Activated naive CD4-positive, alpha-beta T cell treated with anti-CD3 and anti-CD28 coated beads for 36 hours (primary cell): ENCODE measurements at regions of chr1 and their contacts with region 1.

Region 1: GRCh38 chr1:28144203-28145135 is 32.0 kb downstream of the PTAFR start:
- DNase-seq: peak; percentile 77
- H3K4me3 Mint-ChIP-seq: no peak overlapping the region
- H3K27ac Mint-ChIP-seq: no peak overlapping the region
- H3K4me1 Mint-ChIP-seq: peaks cover 16% of the 10 kb centered on the region
- H3K27me3 Mint-ChIP-seq: peaks cover 7% of the 10 kb centered on the region

Region 2: GRCh38 chr1:28056129-28056925 is 88.1 kb before region 1 on chr1:
- CTCF ChIA-PET with region 1: no interaction called
- intact Hi-C with region 1: loop called (anchors 2 kb)
- DNase-seq: peak; percentile 85
- H3K4me3 Mint-ChIP-seq: no peak overlapping the region
- H3K27ac Mint-ChIP-seq: peak overlapping the region; percentile 59
- H3K4me1 Mint-ChIP-seq: peaks cover 45% of the 10 kb centered on the region
- H3K27me3 Mint-ChIP-seq: no peaks in the 10 kb centered on the region

Region 3: GRCh38 chr1:28112388-28113241 is 31.9 kb before region 1 on chr1:
- CTCF ChIA-PET with region 1: no interaction called
- intact Hi-C with region 1: loop called (anchors 1 kb)
- DNase-seq: peak; percentile 25
- H3K4me3 Mint-ChIP-seq: no peak overlapping the region
- H3K27ac Mint-ChIP-seq: no peak overlapping the region
- H3K4me1 Mint-ChIP-seq: peaks cover 13% of the 10 kb centered on the region
- H3K27me3 Mint-ChIP-seq: no peaks in the 10 kb centered on the region

Region 4: DNA sequence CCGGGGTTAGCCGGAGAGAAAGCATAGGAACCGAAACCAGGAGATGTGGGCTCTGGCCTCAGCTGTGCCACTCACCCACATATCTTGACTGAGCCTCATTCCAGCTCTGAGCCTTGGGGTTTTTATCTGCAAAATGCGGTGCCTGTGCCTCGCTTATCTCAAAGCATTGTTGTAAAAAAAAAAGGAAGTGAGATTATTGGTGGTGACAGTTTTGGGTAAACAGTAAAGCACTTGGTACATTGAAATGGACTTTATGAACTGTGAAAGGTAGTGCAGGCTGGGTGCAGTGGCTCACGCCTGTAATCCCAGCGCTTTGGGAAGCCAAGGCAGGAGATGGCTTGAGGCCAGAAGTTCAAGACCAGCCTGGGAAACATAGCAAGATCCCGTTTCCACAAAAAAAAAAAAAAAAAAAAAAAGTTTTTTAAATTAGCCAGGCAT is 28.3 kb after region 1 on chr1:
- CTCF ChIA-PET with region 1: interaction called, 3 read pairs
- intact Hi-C with region 1: loop called (anchors 1 kb)
- DNase-seq: peak; percentile 38
- H3K4me3 Mint-ChIP-seq: no peak overlapping the region
- H3K27ac Mint-ChIP-seq: no peak overlapping the region
- H3K4me1 Mint-ChIP-seq: peaks cover 41% of the 10 kb centered on the region
- H3K27me3 Mint-ChIP-seq: peaks cover 28% of the 10 kb centered on the region

Region 5: GRCh38 chr1:28199328-28200233 is 55.1 kb after region 1 on chr1:
- CTCF ChIA-PET with region 1: no interaction called
- intact Hi-C with region 1: loop called (anchors 1 kb)
- DNase-seq: peak; percentile 75
- H3K4me3 Mint-ChIP-seq: peak overlapping the region; percentile 31
- H3K27ac Mint-ChIP-seq: peak overlapping the region; percentile 90
- H3K4me1 Mint-ChIP-seq: peaks cover 42% of the 10 kb centered on the region
- H3K27me3 Mint-ChIP-seq: no peaks in the 10 kb centered on the region

Region 6: GRCh38 chr1:28329395-28330153 is 185.1 kb after region 1 on chr1:
- CTCF ChIA-PET with region 1: no interaction called
- intact Hi-C with region 1: no loop called
- DNase-seq: peak; percentile 54
- H3K4me3 Mint-ChIP-seq: peak overlapping the region; percentile 94
- H3K27ac Mint-ChIP-seq: peak overlapping the region; percentile 98
- H3K4me1 Mint-ChIP-seq: peaks cover 38% of the 10 kb centered on the region
- H3K27me3 Mint-ChIP-seq: no peaks in the 10 kb centered on the region